PC-9 (cell line): ENCODE measurements at regions of chr2 and their contacts with region 1.

Region 1: DNA sequence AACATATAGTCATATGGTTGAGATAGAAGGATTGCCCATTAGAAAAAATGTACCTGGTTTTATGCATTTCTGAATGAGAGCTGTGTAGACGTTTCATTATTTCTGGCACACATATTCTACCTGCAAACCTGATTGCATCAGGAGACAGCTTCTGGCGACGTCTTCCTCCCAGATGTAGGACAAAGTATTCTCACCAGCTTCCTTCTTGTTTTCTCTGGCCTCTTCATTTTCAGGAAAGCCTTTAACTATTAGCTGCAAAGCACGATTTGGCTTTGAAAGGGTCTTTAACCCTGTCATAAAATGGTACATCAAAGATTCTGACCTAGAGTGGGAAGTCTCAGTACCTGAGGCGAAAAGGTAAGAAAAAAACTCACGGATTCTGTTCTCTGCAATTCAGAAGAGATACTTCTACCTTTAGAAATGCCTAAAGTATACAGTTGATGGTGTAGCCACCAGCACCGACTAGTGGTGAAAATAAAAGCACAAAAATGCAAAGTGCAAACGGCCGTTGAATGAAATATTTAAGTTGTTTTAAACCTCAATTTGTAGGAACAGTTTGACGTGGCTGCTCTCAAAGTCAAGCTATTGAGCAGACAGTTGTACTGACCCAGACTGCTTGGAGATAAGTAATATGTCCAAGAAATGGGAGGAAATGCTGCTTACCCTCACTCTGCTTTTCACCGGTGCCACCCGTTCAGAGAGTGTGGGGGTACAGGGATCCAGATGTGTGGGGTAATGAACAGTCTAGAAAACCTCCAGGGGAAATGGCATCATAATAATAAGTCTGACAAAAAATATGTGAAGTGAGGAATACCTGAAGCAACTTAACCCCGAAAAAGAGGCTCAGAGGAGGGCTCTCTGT is 20.2 kb downstream of the IL18RAP start:
- DNase-seq: peak in 1 of 2 experiments; percentile 39
- H3K4me3 ChIP-seq: no peak overlapping the region
- H3K27ac ChIP-seq: no peak overlapping the region
- H3K4me1 ChIP-seq: peaks cover 8% of the 10 kb centered on the region; the same call in 1 of the 2 replicates
- H3K27me3 ChIP-seq: no peaks in the 10 kb centered on the region
- CTCF ChIP-seq: peak; percentile 84

Region 2: GRCh38 chr2:101267671-101268656 is 1175.2 kb before region 1 on chr2:
- CTCF ChIA-PET with region 1: no interaction called
- POLR2A ChIA-PET with region 1: no interaction called
- intact Hi-C with region 1: loop called (anchors 10 kb)
- DNase-seq: no peak
- H3K4me3 ChIP-seq: no peak overlapping the region
- H3K27ac ChIP-seq: no peak overlapping the region
- H3K4me1 ChIP-seq: peaks cover 14% of the 10 kb centered on the region
- H3K27me3 ChIP-seq: no peaks in the 10 kb centered on the region
- CTCF ChIP-seq: no peak

Region 3: DNA sequence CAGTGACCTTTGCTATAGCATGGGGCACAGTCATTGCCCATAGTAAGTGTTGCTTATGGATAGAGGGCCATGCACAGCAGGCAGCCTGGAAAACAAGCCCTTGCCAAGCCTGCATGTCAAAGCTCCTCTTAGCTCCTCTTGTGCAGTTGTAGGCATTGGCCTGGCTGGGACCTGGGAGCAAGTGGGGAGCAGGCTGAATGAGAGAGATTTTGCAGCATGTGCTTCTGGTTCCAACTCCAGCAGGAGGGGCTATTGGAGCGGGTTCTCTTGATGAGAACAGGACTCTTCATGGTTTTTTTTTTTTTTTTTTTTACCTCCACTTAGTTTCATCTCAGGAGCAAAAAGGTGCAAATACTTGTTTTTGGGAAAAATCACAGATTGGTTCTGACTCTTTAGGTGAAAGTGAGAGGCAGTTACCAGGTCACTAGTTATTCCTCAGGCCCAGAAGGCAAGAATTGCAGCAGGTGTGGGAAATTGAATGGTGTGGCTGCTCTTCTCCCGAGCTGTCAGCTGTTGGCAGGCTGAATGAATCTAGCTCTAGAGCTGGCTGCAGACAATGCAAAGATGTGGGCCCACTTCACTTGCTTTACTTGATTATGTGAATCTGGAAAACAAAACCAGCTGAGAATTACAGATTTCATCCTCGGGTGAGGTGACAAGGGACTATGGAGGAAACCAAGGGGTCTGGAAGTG is 649.8 kb before region 1 on chr2:
- CTCF ChIA-PET with region 1: no interaction called
- POLR2A ChIA-PET with region 1: no interaction called
- intact Hi-C with region 1: no loop called
- DNase-seq: no peak
- H3K4me3 ChIP-seq: no peak overlapping the region
- H3K27ac ChIP-seq: no peak overlapping the region
- H3K4me1 ChIP-seq: peaks cover 17% of the 10 kb centered on the region
- H3K27me3 ChIP-seq: no peaks in the 10 kb centered on the region
- CTCF ChIP-seq: no peak

Region 4: DNA sequence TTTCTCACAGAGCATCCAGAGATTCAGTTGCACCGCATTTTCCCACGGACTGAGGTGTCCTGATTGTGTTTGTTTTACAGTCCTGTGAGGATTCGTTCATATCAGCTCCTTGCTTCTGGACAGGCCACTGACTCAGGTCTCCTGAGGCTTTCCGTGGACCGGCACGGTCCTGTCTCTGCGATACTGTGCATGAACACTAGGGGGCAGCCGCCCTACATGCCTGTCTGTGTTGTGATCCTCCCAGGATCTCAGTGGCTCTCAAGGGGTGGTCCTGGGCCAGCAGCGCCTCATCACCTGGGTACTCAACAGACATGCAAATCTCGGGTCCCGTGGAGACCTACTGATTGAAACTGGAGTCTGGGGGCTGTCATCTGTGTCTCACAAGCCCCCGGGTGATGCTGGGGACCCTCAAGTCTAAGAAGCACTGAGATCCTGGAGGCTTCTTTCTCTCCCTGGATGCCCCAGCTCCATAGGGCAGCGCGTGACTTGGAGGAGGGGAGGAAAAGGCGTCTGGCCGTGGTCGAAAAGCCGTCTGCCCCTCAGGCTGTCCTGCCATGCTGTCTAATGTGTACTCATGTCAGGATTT is 422.5 kb before region 1 on chr2:
- CTCF ChIA-PET with region 1: interaction called, 6 read pairs
- POLR2A ChIA-PET with region 1: no interaction called
- intact Hi-C with region 1: loop called (anchors 1 kb)
- DNase-seq: peak; percentile 53 to 77
- H3K4me3 ChIP-seq: no peak overlapping the region
- H3K27ac ChIP-seq: no peak overlapping the region
- H3K4me1 ChIP-seq: 0 out of 2 replicates have a peak, but pooled peaks cover 4% of the 10 kb centered on the region
- H3K27me3 ChIP-seq: no peaks in the 10 kb centered on the region
- CTCF ChIP-seq: peak; percentile 98

Region 5: DNA sequence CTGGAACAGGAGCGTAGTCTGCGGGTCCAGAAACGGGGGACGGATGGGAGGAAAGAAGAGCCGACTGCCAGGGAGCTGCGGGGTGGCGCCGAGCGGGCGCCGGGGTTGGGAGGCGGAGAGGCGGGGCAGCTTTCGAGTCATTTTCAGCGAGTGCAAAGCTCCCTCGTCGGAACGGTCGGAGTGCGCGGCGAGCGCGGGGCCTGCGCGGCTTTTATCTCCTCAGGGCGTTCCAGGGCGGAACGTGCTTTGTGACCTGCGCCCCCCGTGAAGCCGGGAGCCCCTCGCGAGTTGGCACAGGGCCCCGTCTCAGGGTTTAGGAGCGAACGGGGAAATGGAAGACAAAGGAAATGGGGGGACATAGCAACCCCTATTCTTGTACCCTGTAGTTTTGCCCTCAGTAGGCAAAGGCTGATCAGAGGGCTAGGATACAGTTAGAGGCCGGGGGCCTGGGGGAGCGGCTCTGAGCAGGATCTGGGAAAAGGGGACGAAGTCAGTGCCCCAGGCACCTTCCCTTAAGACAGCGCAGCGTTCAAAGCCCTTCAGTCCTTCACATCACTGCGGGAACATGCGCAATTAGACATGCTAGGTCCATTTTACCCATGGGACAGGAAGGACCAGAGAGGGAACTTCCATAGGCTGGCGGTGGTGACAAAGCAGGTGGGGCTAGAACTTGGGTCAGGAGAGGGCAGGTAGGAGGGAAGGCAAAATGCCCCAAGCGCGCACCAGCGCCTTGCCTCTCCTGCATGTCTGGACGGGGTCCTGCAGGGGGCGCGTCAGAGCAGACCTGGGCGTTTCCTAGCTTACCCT is 192.0 kb before region 1 on chr2:
- CTCF ChIA-PET with region 1: no interaction called
- POLR2A ChIA-PET with region 1: no interaction called
- intact Hi-C with region 1: loop called (anchors 1 kb)
- DNase-seq: peak in 1 of 2 experiments; percentile 69
- H3K4me3 ChIP-seq: peak overlapping the region; percentile 6; the same call in 1 of the 2 replicates
- H3K27ac ChIP-seq: no peak overlapping the region
- H3K4me1 ChIP-seq: peaks cover 9% of the 10 kb centered on the region
- H3K27me3 ChIP-seq: no peaks in the 10 kb centered on the region
- CTCF ChIP-seq: peak; percentile 48

Region 6: DNA sequence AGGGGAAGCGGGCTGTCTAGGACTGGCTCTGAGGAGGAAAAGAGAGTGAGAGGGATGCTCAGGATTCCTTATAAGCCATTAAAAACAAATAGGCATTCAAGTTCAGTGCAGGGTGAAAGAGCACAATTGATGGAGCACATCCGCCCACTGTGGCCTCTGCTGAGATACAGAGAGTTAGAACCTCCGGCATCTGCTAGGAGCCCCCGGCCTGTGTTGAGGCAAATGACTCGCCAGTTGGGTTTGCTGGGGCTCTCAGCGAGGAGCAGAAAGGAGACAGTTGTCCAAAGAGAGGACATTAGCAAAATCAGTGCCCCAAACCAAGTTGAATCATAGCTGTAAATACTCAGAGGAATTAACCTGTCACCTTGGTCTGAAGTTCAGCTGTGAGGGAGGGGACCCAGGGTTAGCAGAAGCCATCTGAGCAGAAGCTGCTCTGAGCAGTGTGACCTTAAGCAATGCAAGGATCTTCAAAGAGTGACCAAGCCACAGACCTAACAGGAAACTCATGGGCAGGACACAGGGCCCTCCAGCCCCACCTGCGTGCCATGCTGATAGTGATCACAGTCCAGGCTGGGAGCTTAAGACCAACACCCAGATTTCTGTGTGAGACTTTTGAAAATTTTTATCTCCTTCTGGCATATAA is 43.6 kb before region 1 on chr2:
- CTCF ChIA-PET with region 1: no interaction called
- POLR2A ChIA-PET with region 1: no interaction called
- intact Hi-C with region 1: loop called (anchors 1 kb)
- DNase-seq: peak in 1 of 2 experiments; percentile 17
- H3K4me3 ChIP-seq: no peak overlapping the region
- H3K27ac ChIP-seq: no peak overlapping the region
- H3K4me1 ChIP-seq: no peaks in the 10 kb centered on the region
- H3K27me3 ChIP-seq: no peaks in the 10 kb centered on the region
- CTCF ChIP-seq: no peak

Region 7: GRCh38 chr2:102460467-102460866 is 17.3 kb after region 1 on chr2:
- CTCF ChIA-PET with region 1: no interaction called
- POLR2A ChIA-PET with region 1: no interaction called
- intact Hi-C with region 1: no loop called
- DNase-seq: no peak
- H3K4me3 ChIP-seq: no peak overlapping the region
- H3K27ac ChIP-seq: no peak overlapping the region
- H3K4me1 ChIP-seq: no peaks in the 10 kb centered on the region
- H3K27me3 ChIP-seq: no peaks in the 10 kb centered on the region
- CTCF ChIP-seq: no peak

Region 8: GRCh38 chr2:102771114-102771513 is 327.9 kb after region 1 on chr2:
- CTCF ChIA-PET with region 1: no interaction called
- POLR2A ChIA-PET with region 1: no interaction called
- intact Hi-C with region 1: no loop called
- DNase-seq: no peak
- H3K4me3 ChIP-seq: no peak overlapping the region
- H3K27ac ChIP-seq: no peak overlapping the region
- H3K4me1 ChIP-seq: no peaks in the 10 kb centered on the region
- H3K27me3 ChIP-seq: no peaks in the 10 kb centered on the region
- CTCF ChIP-seq: no peak

Region 9: GRCh38 chr2:103991591-103991990 is 1548.4 kb after region 1 on chr2:
- CTCF ChIA-PET with region 1: no interaction called
- POLR2A ChIA-PET with region 1: no interaction called
- intact Hi-C with region 1: no loop called
- DNase-seq: no peak
- H3K4me3 ChIP-seq: no peak overlapping the region
- H3K27ac ChIP-seq: no peak overlapping the region
- H3K4me1 ChIP-seq: no peaks in the 10 kb centered on the region
- H3K27me3 ChIP-seq: 0 out of 2 replicates have a peak, but pooled peaks cover 2% of the 10 kb centered on the region
- CTCF ChIP-seq: 0 out of 2 replicates have a peak, but pooled peaks have one; percentile 33